ENCODE measurements at regions of chr19 and their contacts with region 1.

Region 1: DNA sequence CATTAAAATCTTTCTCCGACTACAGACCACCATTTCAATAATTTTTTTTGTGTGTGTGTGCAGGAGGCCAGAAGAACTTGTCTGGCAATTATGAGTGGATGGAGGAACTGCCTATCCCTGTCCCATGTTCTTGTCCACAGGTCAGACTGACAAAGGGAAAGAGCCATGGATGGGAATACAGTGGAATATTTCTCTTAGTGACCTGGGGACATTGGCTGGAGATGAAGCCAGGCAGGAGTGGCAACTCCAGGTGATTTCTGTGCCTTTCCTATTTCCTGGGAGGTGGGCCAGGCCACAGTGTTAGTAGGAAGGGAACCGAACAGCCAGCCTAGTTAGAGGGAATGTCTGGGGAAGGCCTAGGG is 3.7 kb downstream of the PSG9 start:
- DNase-seq: no peak
- ATAC-seq: no peak
- H3K4me3 ChIP-seq: no peak overlapping the region
- H3K4me3 Mint-ChIP-seq: no peak overlapping the region
- H3K27ac ChIP-seq: no peak overlapping the region
- H3K27ac Mint-ChIP-seq: no peak overlapping the region
- H3K4me1 ChIP-seq: no peaks in the 10 kb centered on the region
- H3K4me1 Mint-ChIP-seq: no peaks in the 10 kb centered on the region
- H3K27me3 ChIP-seq: no peaks in the 10 kb centered on the region
- H3K27me3 Mint-ChIP-seq: peaks cover 20% of the 10 kb centered on the region
- CTCF ChIP-seq: no peak

Region 2: GRCh38 chr19:42857561-42857901 is 408.1 kb before region 1 on chr19:
- CTCF ChIA-PET with region 1: no interaction called
- POLR2A ChIA-PET with region 1: no interaction called
- intact Hi-C with region 1: no loop called
- DNase-seq: no peak
- ATAC-seq: no peak
- H3K4me3 ChIP-seq: no peak overlapping the region
- H3K4me3 Mint-ChIP-seq: no peak overlapping the region
- H3K27ac ChIP-seq: no peak overlapping the region
- H3K27ac Mint-ChIP-seq: no peak overlapping the region
- H3K4me1 ChIP-seq: no peaks in the 10 kb centered on the region
- H3K4me1 Mint-ChIP-seq: no peaks in the 10 kb centered on the region
- H3K27me3 ChIP-seq: no peaks in the 10 kb centered on the region
- H3K27me3 Mint-ChIP-seq: peaks cover 4% of the 10 kb centered on the region
- CTCF ChIP-seq: no peak

Region 3: DNA sequence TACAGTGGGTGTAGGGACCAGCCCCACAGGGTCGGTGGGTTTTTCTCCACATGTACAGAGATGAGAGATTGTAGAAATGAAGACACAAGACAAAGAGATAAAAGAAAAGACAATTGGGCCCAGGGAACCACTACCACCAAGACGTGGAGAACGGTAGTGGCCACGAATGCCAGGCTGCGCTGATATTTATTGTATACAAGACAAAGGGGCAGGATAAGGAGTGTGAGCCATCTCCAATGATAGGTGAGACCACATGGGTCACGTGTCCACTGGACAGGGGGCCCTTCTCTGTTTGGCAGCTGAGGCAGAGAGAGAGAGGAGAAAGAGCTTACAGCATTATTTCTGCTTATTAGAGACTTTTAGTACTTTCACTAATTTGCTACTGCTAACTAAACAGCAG is 74.5 kb before region 1 on chr19:
- CTCF ChIA-PET with region 1: no interaction called
- POLR2A ChIA-PET with region 1: no interaction called
- intact Hi-C with region 1: loop called (anchors 2 kb)
- DNase-seq: no peak
- ATAC-seq: no peak
- H3K4me3 ChIP-seq: no peak overlapping the region
- H3K4me3 Mint-ChIP-seq: no peak overlapping the region
- H3K27ac ChIP-seq: no peak overlapping the region
- H3K27ac Mint-ChIP-seq: no peak overlapping the region
- H3K4me1 ChIP-seq: no peaks in the 10 kb centered on the region
- H3K4me1 Mint-ChIP-seq: no peaks in the 10 kb centered on the region
- H3K27me3 ChIP-seq: peaks cover 0 to 2% of the 10 kb centered on the region in 2 experiments
- H3K27me3 Mint-ChIP-seq: peaks cover 54% of the 10 kb centered on the region
- CTCF ChIP-seq: no peak

Region 4: GRCh38 chr19:43229315-43229714 is 36.3 kb before region 1 on chr19:
- CTCF ChIA-PET with region 1: no interaction called
- POLR2A ChIA-PET with region 1: no interaction called
- intact Hi-C with region 1: no loop called
- DNase-seq: no peak
- ATAC-seq: no peak
- H3K4me3 ChIP-seq: no peak overlapping the region
- H3K4me3 Mint-ChIP-seq: no peak overlapping the region
- H3K27ac ChIP-seq: no peak overlapping the region
- H3K27ac Mint-ChIP-seq: no peak overlapping the region
- H3K4me1 ChIP-seq: no peaks in the 10 kb centered on the region
- H3K4me1 Mint-ChIP-seq: no peaks in the 10 kb centered on the region
- H3K27me3 ChIP-seq: no peaks in the 10 kb centered on the region
- H3K27me3 Mint-ChIP-seq: no peaks in the 10 kb centered on the region
- CTCF ChIP-seq: no peak

Region 5: GRCh38 chr19:43290568-43291359 is 25.1 kb after region 1 on chr19:
- CTCF ChIA-PET with region 1: no interaction called
- POLR2A ChIA-PET with region 1: no interaction called
- intact Hi-C with region 1: no loop called
- DNase-seq: peak in 2 of 14 experiments; percentile 5 to 25
- ATAC-seq: no peak
- H3K4me3 ChIP-seq: no peak overlapping the region
- H3K4me3 Mint-ChIP-seq: no peak overlapping the region
- H3K27ac ChIP-seq: no peak overlapping the region
- H3K27ac Mint-ChIP-seq: no peak overlapping the region
- H3K4me1 ChIP-seq: no peaks in the 10 kb centered on the region
- H3K4me1 Mint-ChIP-seq: no peaks in the 10 kb centered on the region
- H3K27me3 ChIP-seq: peaks cover 0 to 4% of the 10 kb centered on the region in 2 experiments
- H3K27me3 Mint-ChIP-seq: peaks cover 18% of the 10 kb centered on the region
- CTCF ChIP-seq: no peak

Region 6: GRCh38 chr19:43316592-43317319 is 51.1 kb after region 1 on chr19:
- CTCF ChIA-PET with region 1: no interaction called
- POLR2A ChIA-PET with region 1: no interaction called
- intact Hi-C with region 1: no loop called
- DNase-seq: no peak
- ATAC-seq: no peak
- H3K4me3 ChIP-seq: no peak overlapping the region
- H3K4me3 Mint-ChIP-seq: no peak overlapping the region
- H3K27ac ChIP-seq: no peak overlapping the region
- H3K27ac Mint-ChIP-seq: no peak overlapping the region
- H3K4me1 ChIP-seq: no peaks in the 10 kb centered on the region
- H3K4me1 Mint-ChIP-seq: no peaks in the 10 kb centered on the region
- H3K27me3 ChIP-seq: peaks cover 0 to 6% of the 10 kb centered on the region in 2 experiments
- H3K27me3 Mint-ChIP-seq: peaks cover 4% of the 10 kb centered on the region
- CTCF ChIP-seq: no peak

Measured in CD4-positive, alpha-beta T cell (primary cell).